ENCODE measurements at regions of chr1 and their contacts with region 1.

Region 1: GRCh38 chr1:93304716-93305138 is 41.0 kb upstream of the DR1 start:
- DNase-seq: peak; percentile 51 to 60 (median 59)
- H3K4me3 ChIP-seq: no peak overlapping the region
- H3K4me3 Mint-ChIP-seq: no peak overlapping the region
- H3K27ac ChIP-seq: no peak overlapping the region
- H3K27ac Mint-ChIP-seq: no peak overlapping the region
- H3K4me1 ChIP-seq: no peaks in the 10 kb centered on the region
- H3K4me1 Mint-ChIP-seq: peaks cover 0 to 1% (median 0%) of the 10 kb centered on the region in 4 donors
- H3K27me3 ChIP-seq: no peaks in the 10 kb centered on the region
- H3K27me3 Mint-ChIP-seq: no peaks in the 10 kb centered on the region

Region 2: DNA sequence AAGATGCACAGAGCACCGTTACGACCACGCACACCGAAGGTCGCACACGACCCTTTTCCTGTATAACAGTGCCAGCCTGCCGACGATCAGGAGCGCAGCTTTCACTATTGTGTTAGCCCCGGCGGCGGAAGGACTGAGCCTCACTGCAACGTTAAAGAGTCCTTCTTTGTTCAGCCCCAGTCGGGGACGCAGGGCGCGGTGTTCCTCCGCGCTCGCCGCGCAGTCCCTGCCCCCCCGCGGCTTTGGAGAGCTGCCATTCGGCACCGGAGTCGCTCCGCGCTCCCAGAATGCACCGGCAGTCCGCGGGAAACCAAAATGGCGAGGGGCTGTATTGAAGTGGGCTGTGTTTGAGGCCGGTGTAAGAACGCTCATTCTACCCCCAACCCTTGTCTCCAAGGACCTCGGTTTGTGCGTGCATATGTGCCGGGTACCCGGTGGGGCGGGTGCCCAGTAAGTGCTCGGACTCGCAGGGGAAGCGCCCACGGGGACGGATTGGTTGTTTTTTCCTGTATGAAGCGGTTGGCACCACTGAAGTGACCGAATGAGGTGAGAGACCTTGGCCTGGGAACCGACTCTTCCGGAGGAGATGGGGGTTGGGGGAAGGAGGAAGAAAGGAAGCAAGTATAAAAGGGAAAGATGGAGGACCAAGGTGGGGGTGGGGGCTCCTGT is 225.6 kb before region 1 on chr1 and contains the start of gene MTF2:
- CTCF ChIA-PET with region 1: interaction called, 19 read pairs
- POLR2A ChIA-PET with region 1: no interaction called
- intact Hi-C with region 1: loop called (anchors 1 kb)
- DNase-seq: peak; percentile 89 to 91 (median 90)
- H3K4me3 ChIP-seq: peak within 1 kb of the TSS; percentile 97
- H3K4me3 Mint-ChIP-seq: peak within 1 kb of the TSS; percentile 92 to 99 (median 98)
- H3K27ac ChIP-seq: peak within 1 kb of the TSS; percentile 96
- H3K27ac Mint-ChIP-seq: peak within 1 kb of the TSS; percentile 94 to 100 (median 95)
- H3K4me1 ChIP-seq: peaks cover 46% of the 10 kb centered on the region
- H3K4me1 Mint-ChIP-seq: peaks cover 21 to 58% (median 37%) of the 10 kb centered on the region in 4 donors
- H3K27me3 ChIP-seq: no peaks in the 10 kb centered on the region
- H3K27me3 Mint-ChIP-seq: no peaks in the 10 kb centered on the region
- total RNA-seq, gene MTF2: 46.5 to 47.4 TPM

Region 3: DNA sequence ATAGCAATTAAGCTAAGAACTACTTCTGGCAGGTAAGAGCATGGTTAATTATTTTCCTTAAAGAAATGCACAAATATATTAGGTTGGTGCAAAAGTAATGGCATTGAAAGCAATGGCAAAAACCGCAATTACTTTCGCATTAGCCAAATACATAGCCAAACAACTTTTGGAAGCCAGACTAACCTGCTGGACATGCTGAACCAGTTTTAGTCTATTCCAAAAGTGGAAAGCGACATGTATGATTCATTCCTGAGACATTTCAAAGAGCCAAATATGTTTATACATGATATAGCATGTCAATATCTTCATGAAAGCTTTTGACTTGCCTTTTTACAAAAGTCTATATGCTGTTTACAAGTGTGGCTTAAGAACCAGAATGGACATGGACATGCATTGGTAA is 17.6 kb after region 1 on chr1:
- CTCF ChIA-PET with region 1: interaction called, 15 read pairs
- POLR2A ChIA-PET with region 1: no interaction called
- intact Hi-C with region 1: no loop called
- DNase-seq: no peak
- H3K4me3 ChIP-seq: no peak overlapping the region
- H3K4me3 Mint-ChIP-seq: no peak overlapping the region
- H3K27ac ChIP-seq: no peak overlapping the region
- H3K27ac Mint-ChIP-seq: no peak overlapping the region
- H3K4me1 ChIP-seq: no peaks in the 10 kb centered on the region
- H3K4me1 Mint-ChIP-seq: peaks cover 0 to 3% (median 0%) of the 10 kb centered on the region in 4 donors
- H3K27me3 ChIP-seq: no peaks in the 10 kb centered on the region
- H3K27me3 Mint-ChIP-seq: no peaks in the 10 kb centered on the region

Region 4: GRCh38 chr1:93352376-93352775 is 47.6 kb after region 1 on chr1:
- CTCF ChIA-PET with region 1: interaction called, 11 read pairs
- POLR2A ChIA-PET with region 1: no interaction called
- intact Hi-C with region 1: no loop called
- DNase-seq: no peak
- H3K4me3 ChIP-seq: no peak overlapping the region
- H3K4me3 Mint-ChIP-seq: peak overlapping the region in 7 of 8 donors; percentile 33 to 59 (median 46)
- H3K27ac ChIP-seq: no peak overlapping the region
- H3K27ac Mint-ChIP-seq: peak overlapping the region in 3 of 7 donors; percentile 0 to 62 (median 41)
- H3K4me1 ChIP-seq: peaks cover 80% of the 10 kb centered on the region
- H3K4me1 Mint-ChIP-seq: peaks cover 33 to 73% (median 48%) of the 10 kb centered on the region in 4 donors
- H3K27me3 ChIP-seq: no peaks in the 10 kb centered on the region
- H3K27me3 Mint-ChIP-seq: no peaks in the 10 kb centered on the region

Region 5: DNA sequence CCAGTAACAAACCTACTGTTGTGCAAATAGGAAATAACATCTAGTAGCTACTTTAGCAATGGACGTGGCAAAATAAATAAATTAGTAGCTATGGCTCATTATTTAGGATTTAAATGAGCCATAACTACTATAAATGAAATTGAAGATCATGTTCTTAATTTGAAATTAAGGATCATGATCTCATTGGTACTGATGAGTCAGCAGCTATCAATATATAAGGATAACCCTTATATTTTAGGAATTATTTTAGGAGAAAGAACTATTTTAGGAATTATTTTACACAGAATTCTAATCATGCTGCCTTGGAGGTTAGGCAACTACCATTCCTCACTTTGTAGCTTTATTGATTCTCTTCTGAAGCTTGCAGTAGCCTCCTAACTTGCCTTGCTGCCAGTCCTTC is 65.0 kb after region 1 on chr1:
- CTCF ChIA-PET with region 1: interaction called, 10 read pairs
- POLR2A ChIA-PET with region 1: no interaction called
- intact Hi-C with region 1: no loop called
- DNase-seq: no peak
- H3K4me3 ChIP-seq: no peak overlapping the region
- H3K4me3 Mint-ChIP-seq: no peak overlapping the region
- H3K27ac ChIP-seq: no peak overlapping the region
- H3K27ac Mint-ChIP-seq: no peak overlapping the region
- H3K4me1 ChIP-seq: no peaks in the 10 kb centered on the region
- H3K4me1 Mint-ChIP-seq: peaks cover 0 to 4% (median 3%) of the 10 kb centered on the region in 4 donors
- H3K27me3 ChIP-seq: no peaks in the 10 kb centered on the region
- H3K27me3 Mint-ChIP-seq: no peaks in the 10 kb centered on the region

Region 6: DNA sequence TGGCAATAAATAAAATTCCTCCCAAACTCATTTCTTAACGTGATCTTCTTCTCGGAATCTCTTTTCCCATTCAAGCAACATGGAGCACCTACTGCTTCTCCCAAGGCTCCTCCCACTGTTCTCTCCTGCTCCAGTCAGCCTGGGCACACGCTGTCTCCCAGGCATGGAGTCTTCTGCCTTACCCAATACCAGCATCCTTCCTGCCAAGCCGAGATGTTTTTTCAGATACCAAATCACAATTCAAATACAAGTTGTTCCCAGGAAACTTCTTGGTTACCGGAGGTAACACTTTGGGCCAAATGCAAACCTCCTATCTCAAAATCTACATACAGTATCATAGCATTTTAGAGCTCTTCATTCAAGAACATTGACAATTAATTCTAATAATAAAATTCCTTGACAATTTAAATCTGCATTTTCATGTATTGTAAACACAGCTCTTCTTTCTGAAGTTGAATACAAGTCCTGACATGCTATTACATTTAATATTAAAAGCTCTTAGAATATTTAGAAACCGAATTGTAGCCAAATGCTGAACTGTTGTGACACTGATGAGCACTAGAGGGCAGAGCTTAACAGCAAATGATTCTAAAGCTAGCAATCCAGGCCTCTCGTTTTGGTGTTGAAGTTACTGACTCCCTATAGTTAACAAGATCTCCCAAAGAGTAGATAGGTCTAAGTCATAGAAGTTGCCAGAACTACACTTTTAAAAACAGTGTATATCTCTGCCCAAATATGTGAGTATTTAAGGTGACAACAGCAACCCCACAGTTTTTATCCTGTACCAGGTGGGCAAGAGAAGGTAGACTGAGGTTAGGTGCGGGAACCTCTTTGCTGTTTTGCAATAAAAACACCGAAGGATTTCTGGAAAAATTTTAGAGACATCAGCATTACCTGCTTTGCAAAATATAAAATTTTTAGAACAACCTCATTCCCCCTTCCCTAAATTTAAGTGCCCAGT is 324.7 kb after region 1 on chr1:
- CTCF ChIA-PET with region 1: interaction called, 18 read pairs
- POLR2A ChIA-PET with region 1: no interaction called
- intact Hi-C with region 1: loop called (anchors 10 kb)
- DNase-seq: peak in 4 of 5 donors; percentile 62 to 69 (median 63)
- H3K4me3 ChIP-seq: no peak overlapping the region
- H3K4me3 Mint-ChIP-seq: no peak overlapping the region
- H3K27ac ChIP-seq: no peak overlapping the region
- H3K27ac Mint-ChIP-seq: peak overlapping the region in 2 of 7 donors; percentile 46 to 55
- H3K4me1 ChIP-seq: no peaks in the 10 kb centered on the region
- H3K4me1 Mint-ChIP-seq: no peaks in the 10 kb centered on the region
- H3K27me3 ChIP-seq: no peaks in the 10 kb centered on the region
- H3K27me3 Mint-ChIP-seq: no peaks in the 10 kb centered on the region

Measured in CD4-positive, alpha-beta memory T cell (primary cell).